ENCODE measurements at regions of chr2 and their contacts with region 1.

Region 1: GRCh38 chr2:96940001-96940615 is 46.3 kb downstream of the FAM178B start:
- DNase-seq: no peak
- H3K4me3 Mint-ChIP-seq: no peak overlapping the region
- H3K27ac Mint-ChIP-seq: no peak overlapping the region
- H3K4me1 Mint-ChIP-seq: peaks cover 19% of the 10 kb centered on the region
- H3K27me3 Mint-ChIP-seq: peaks cover 3% of the 10 kb centered on the region

Region 2: DNA sequence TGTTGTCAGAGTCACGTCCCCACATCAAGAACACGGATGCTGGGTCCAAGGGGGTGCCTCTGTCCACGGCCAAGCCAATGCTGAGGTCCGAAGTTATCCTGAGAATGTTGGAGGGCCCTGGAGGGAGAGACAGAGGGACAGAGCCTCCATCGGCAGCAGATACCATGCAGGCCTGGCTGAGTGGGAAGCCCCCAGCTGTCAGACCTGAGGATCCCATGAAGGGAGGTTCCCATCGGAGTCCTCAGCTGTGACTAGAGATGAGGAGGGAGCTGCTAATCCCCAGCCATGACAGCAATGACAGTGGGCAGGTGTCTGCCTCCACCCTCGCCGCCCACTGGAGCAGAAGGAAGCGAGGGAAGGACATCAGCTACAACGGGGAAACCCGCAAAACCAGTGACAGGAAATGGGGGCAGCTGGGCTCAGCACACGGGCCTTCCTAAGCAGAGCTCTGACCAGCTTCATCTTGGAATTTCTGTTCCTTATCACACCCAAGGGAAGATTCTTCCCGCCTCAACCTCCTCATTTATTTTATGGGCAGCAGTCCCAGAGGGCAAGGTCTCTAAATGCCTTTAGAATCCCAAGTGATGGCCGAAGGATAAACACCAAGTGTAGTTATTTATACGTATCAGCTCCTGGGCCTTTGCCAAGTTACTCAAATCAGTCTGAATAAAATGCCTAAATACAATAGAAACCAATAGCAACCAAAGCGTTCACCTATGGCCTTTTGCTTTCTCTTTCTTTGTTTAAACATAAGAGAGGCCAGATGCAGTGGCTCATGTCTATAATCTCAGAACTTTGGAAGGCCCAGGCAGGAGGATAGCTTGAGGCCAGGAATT is 14.1 kb after region 1 on chr2:
- intact Hi-C with region 1: loop called (anchors 2 kb)
- DNase-seq: peak; percentile 22
- H3K4me3 Mint-ChIP-seq: no peak overlapping the region
- H3K27ac Mint-ChIP-seq: peak overlapping the region; percentile 38
- H3K4me1 Mint-ChIP-seq: peaks cover 26% of the 10 kb centered on the region
- H3K27me3 Mint-ChIP-seq: no peaks in the 10 kb centered on the region

Region 3: GRCh38 chr2:97718051-97718882 is 778.2 kb after region 1 on chr2:
- intact Hi-C with region 1: no loop called
- DNase-seq: peak; percentile 69
- H3K4me3 Mint-ChIP-seq: peak overlapping the region; percentile 97
- H3K27ac Mint-ChIP-seq: peak overlapping the region; percentile 91
- H3K4me1 Mint-ChIP-seq: peaks cover 67% of the 10 kb centered on the region
- H3K27me3 Mint-ChIP-seq: no peaks in the 10 kb centered on the region

Region 4: GRCh38 chr2:98253461-98254070 is 1313.5 kb after region 1 on chr2:
- intact Hi-C with region 1: no loop called
- DNase-seq: no peak
- H3K4me3 Mint-ChIP-seq: no peak overlapping the region
- H3K27ac Mint-ChIP-seq: no peak overlapping the region
- H3K4me1 Mint-ChIP-seq: no peaks in the 10 kb centered on the region
- H3K27me3 Mint-ChIP-seq: peaks cover 2% of the 10 kb centered on the region

Measured in activated T-helper 2 cell treated with anti-CD3 and anti-CD28 coated beads, Interferon-gamma antibody, Interleukin-2, Interleukin-4, amounts not matched to agents 10 μg/mL and 5 μg/mL and 100 μg/mL, durations not matched to agents 14 hours and 24 hours and 36 hours (primary cell).